ENCODE measurements at regions of chr2 and their contacts with region 1.

Region 1: DNA sequence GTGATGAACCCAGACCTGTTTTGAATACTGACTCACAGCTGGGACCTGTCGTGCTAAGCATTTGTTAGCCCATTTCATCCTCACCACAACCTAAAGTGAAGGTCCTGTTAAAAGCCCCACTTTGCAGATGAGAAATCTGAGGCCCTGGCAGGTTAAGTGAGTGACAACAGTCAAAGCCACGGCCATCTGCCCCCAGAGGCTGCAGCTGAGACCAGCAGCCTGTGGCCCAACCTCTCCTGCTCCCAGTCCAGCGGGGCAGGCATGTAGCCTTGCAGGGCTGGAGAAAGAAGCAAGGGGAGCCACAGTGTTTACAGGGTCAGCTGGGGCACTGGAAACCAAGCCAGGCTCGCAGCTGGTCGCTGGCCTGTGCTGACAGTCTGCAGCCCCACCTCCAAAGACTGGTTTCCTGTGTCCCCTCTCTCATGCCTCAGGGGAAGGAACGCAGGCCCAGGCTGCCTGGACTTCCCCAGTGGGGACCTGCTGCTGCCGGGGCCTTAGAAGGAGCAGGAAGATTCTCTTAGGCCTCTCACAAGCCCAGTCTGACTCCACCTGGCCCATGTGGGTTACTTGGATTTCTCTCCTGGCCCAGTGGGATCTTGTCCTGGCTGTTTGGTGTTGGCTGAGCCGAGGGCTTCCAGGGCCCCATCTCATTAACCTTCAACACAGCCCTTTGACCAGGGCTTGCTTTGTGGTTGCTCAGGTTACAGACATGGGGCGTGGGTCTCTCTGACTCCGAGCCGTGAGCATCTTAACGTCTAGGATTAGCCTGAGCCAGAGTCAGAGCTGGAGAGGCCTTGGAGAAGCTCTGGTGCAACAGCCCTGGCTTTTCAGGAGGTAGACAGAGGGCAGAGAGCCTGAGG is 1.7 kb downstream of the INPP5D start:
- DNase-seq: peak; percentile 73
- H3K4me3 ChIP-seq: peak overlapping the region; percentile 81
- H3K27ac ChIP-seq: peak overlapping the region; percentile 87
- H3K4me1 ChIP-seq: peaks cover 38% of the 10 kb centered on the region
- CTCF ChIP-seq: peak; percentile 67

Region 2: DNA sequence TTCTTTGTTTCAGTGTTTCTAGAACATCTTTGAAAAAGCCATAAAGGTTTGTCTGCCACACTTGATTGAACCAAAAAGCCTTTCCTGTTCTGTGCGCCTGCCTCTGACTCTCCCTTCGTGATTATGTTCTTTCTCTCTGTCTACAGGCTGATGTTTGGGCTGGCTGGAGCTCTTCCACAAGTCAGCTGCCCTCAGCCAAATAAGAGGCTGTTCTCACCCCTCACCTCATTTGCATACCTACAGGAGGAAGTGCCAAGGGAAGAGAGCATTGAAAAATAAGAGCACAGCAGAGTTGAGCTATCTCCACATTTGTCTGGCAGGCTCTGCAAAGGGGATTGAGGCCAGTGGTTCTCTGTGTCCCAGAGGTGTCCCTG is 14.1 kb after region 1 on chr2:
- CTCF ChIA-PET with region 1: interaction called, 5 read pairs
- POLR2A ChIA-PET with region 1: interaction called, 40 read pairs
- intact Hi-C with region 1: loop called (anchors 2 kb)
- DNase-seq: peak; percentile 93
- H3K4me3 ChIP-seq: peak overlapping the region; percentile 56
- H3K27ac ChIP-seq: peak overlapping the region; percentile 93
- H3K4me1 ChIP-seq: peaks cover 90% of the 10 kb centered on the region
- CTCF ChIP-seq: no peak

Region 3: DNA sequence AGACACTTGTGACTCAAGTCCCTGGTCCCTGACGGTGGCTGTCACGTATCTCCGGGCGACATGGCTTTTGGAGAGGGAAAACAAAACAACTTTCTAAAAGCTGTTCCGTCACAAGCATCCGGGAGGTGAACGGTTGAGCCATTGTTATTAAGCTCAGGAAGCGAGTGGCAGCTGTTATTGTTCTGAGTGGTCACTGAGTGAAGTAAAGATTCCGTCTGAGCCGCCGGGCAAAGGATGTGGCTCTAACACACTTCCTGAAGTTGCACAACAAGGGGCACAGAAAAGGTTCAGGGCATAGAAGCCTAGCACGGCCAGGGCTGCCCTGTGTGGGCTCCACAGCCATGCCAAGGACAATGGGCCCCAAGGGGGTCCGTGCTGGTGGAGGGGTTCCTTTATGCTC is 22.7 kb after region 1 on chr2:
- CTCF ChIA-PET with region 1: interaction called, 12 read pairs
- POLR2A ChIA-PET with region 1: interaction called, 19 read pairs
- intact Hi-C with region 1: loop called (anchors 1 kb)
- DNase-seq: peak; percentile 93
- H3K4me3 ChIP-seq: peak overlapping the region; percentile 47
- H3K27ac ChIP-seq: peak overlapping the region; percentile 98
- H3K4me1 ChIP-seq: peaks cover 95% of the 10 kb centered on the region
- CTCF ChIP-seq: no peak

Region 4: GRCh38 chr2:233092432-233093165 is 30.8 kb after region 1 on chr2:
- CTCF ChIA-PET with region 1: interaction called, 3 read pairs
- POLR2A ChIA-PET with region 1: interaction called, 19 read pairs
- intact Hi-C with region 1: loop called (anchors 1 kb)
- DNase-seq: no peak
- H3K4me3 ChIP-seq: peak overlapping the region; percentile 33
- H3K27ac ChIP-seq: peak overlapping the region; percentile 64
- H3K4me1 ChIP-seq: peaks cover 59% of the 10 kb centered on the region
- CTCF ChIP-seq: no peak

Region 5: DNA sequence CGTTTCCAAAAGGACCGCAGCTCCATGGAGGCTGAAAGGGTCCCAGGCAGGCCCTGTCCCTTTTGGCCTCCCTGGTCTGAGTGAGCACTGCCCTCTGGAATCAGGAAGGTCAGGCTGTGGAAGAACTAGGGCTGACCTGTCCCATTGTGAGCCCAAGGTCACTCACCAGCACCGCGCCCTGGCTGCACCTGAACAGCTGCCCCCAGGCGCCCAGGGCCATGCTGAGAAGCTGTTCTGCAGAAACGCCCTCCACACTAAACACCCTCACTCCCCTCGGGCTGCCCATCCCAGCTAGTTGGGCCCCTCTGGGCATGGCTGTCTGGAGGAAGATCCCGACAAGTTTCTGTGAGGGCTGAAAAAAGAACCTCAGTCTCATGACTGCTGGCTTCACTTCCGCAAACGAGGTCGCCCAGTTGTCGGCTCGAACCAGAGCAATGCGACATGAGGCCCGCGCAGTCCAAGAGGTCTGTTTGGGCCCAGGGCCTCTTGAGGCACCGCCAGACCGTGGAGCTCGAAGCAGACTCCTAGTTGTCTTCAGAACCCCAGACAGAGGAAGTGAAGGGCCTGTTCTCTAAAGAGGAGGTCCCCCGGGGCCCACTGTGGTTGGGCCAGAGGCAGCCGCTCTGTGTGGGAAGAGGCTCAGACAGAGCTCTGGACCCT is 62.7 kb after region 1 on chr2:
- CTCF ChIA-PET with region 1: no interaction called
- POLR2A ChIA-PET with region 1: interaction called, 6 read pairs
- intact Hi-C with region 1: loop called (anchors 2 kb)
- DNase-seq: peak; percentile 86
- H3K4me3 ChIP-seq: peak overlapping the region; percentile 57
- H3K27ac ChIP-seq: peak overlapping the region; percentile 80
- H3K4me1 ChIP-seq: peaks cover 22% of the 10 kb centered on the region
- CTCF ChIP-seq: no peak

Region 6: DNA sequence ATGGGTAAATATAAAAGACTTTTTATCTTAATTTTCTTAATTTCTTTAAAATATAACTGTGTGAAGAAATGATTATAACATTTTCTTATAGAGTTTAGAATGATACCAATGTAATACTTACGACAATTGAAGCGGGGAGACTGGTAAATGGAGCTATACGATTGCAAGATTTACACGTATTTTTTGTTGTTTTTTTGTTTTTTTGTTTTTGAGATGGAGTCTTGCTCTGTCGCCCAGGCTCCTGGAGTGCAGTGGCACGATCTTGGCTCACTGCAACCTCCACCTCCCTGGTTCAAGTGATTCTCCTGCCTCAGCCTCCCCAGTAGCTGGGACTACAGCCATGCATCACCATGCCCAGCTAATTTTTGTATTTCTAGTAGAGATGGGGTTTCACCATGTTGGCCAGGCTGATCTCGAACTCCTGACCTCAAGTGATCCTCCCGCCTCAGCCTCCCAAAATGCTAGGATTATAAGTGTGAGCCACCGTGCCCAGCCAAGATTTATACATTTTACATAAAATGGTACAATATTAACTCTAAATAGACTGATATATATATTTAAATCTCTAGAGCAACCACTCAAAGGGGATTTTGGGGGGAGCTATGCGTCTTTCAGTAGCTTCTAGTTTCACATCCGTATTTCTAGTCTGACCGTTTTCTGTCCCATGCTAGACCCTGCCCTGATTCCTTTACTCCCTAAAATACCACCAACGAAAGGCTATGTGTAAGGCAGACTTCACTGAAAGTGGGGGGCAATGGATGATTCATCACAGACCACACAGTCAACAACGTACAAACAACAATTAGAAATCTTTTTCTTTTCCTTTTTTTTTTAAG is 161.5 kb after region 1 on chr2:
- CTCF ChIA-PET with region 1: no interaction called
- POLR2A ChIA-PET with region 1: interaction called, 4 read pairs
- intact Hi-C with region 1: loop called (anchors 5 kb)
- DNase-seq: peak; percentile 86
- H3K4me3 ChIP-seq: no peak overlapping the region
- H3K27ac ChIP-seq: peak overlapping the region; percentile 80
- H3K4me1 ChIP-seq: peaks cover 70% of the 10 kb centered on the region
- CTCF ChIP-seq: no peak

Region 7: GRCh38 chr2:233303252-233303651 is 241.4 kb after region 1 on chr2:
- CTCF ChIA-PET with region 1: no interaction called
- POLR2A ChIA-PET with region 1: no interaction called
- intact Hi-C with region 1: no loop called
- DNase-seq: peak; percentile 15
- H3K4me3 ChIP-seq: no peak overlapping the region
- H3K27ac ChIP-seq: no peak overlapping the region
- H3K4me1 ChIP-seq: no peaks in the 10 kb centered on the region
- CTCF ChIP-seq: peak; percentile 43

Measured in OCI-LY7 (cell line).